ENCODE measurements at regions of chr7 and their contacts with region 1.

Region 1: GRCh38 chr7:27210441-27211083 is 10.7 kb upstream of the HOXA13 start:
- DNase-seq: peak; percentile 85 to 89
- ATAC-seq: peak; percentile 76

Region 2: GRCh38 chr7:27130540-27131389 is 79.8 kb before region 1 on chr7 and contains the start of gene HOXA4:
- intact Hi-C with region 1: no loop called
- DNase-seq: peak; percentile 94 to 95
- ATAC-seq: peak; percentile 85
- total RNA-seq, gene HOXA4: 4.5 to 5.1 TPM

Region 3: DNA sequence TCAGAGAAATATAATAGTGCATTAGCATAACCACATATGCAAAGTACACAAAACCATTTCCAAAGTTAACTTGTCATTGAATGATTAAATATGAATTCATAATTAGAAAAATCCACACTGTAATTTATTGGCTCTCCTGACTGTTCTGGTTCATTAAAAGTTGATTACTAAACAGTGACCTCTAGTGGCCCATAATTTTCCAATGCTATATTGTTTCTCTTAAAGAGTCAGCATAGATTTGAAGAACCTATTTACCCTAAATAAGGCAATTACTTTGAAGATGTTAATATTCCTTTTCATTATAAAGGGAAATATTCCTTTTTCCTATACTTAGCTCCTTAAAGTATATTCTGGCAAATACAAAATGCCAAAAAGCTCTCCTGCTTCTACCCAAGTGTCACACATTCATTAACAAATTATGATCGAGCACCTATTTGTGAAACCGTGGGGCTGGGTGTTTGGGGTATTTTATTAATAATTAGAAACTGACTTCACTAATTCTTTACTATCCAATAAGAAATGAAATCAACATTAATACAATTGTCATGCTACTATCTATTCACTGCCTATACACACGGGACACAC is 365.9 kb after region 1 on chr7:
- intact Hi-C with region 1: loop called in 1 of 2 experiments (anchors 10 kb)
- DNase-seq: no peak
- ATAC-seq: peak; percentile 68

Region 4: DNA sequence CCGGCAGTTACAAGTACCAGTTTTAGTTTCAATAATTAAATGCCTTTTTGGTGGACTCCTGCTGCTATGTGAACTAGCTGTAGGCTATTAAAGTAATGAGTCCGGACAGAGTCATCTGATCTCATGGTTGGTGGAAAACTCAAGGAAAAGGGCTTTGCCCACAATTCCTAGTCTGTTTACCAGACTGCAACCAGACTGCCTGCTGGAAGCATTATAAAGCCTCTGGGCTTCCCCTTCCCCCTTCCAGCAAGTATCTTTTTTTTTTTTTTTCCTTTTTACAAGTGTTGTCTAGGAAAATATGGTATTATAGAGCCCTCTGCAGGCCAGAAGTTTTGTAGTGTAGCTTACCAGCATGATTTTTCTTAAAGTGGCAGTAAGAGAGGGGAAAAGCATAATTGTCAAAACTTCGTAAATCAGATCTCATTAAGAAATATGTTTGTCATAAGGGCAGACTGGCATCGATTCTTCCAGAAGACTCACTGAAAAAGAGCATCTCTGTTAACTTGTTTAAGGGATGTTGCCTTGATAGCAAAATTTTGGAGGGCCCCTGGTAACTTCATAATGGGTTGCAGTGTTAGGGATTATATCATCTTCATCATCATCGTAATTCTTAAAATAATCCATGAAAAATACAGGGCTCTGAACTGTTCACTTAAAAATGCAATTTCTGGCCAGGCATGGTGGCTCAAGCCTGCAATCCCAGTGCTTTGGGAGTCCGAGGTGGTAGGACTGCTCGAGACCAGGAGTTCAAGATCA is 710.7 kb after region 1 on chr7:
- intact Hi-C with region 1: loop called in 1 of 2 experiments (anchors 10 kb)
- DNase-seq: no peak
- ATAC-seq: peak; percentile 88

Region 5: DNA sequence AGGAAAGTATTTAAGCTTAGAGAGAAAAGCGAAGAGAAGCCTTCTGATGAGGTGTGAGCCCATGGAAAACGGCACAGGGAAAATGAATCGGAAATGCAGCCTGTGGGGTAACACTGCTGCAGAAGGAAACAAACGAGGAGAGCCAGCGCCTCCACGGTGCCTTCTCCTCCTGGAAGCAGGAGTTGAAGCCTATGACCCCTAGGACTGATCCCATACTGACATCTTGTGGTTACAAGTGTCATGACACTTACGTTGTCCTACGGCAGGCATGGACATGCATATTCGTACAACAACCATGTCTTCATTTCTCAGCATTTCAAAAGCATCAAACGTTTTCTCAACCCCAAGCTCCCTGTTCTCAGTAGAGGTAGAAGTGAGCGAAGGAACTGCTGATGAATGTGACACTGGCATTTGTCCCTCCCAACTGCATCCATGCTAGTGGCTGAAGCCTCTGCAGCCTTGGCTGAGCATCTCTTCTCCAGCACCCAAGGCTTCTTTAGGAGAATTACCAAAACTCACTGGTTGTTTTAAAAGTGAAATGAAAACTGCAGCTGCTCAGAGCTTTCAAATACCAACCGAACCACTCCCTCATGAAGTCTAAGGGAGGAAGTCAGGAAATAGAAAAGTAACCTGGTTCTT is 809.9 kb after region 1 on chr7:
- intact Hi-C with region 1: loop called in 1 of 2 experiments (anchors 10 kb)
- DNase-seq: peak; percentile 55 to 65
- ATAC-seq: peak; percentile 98